HEK293T (cell line): ENCODE measurements at regions of chr11 and their contacts with region 1.

Region 1: DNA sequence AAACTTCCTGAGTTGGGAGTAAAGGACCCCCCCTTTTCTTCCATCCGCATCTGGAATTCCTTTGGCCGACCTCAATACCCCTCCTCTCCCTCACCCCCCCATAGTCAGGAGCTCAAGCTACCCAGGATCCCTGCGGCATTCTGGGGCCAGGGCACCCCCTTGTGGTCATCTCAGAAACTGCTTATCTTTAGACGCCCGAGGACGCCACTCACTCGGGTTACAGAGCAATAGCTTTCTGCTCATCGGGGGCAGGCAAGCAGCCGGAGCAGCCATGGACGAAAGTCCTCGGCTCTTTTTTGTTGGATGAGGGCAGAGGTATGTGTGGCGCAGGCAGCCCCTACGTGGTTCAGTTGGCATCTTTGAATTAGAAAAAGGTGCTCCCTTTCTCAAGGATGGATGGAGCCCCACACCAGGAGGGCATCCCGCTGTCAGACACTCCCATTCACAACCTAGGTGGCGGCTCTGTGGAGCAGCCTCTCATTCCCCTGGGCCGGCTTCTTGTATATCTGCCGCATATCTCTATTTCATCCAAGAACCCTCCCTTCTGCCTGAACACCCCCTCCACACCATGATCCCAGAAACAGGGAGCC is 2.3 kb downstream of the C1QTNF5 start:
- DNase-seq: peak; percentile 85

Region 2: GRCh38 chr11:118771547-118772288 is 566.7 kb before region 1 on chr11:
- CTCF ChIA-PET with region 1: no interaction called
- POLR2A ChIA-PET with region 1: no interaction called
- DNase-seq: no peak

Region 3: DNA sequence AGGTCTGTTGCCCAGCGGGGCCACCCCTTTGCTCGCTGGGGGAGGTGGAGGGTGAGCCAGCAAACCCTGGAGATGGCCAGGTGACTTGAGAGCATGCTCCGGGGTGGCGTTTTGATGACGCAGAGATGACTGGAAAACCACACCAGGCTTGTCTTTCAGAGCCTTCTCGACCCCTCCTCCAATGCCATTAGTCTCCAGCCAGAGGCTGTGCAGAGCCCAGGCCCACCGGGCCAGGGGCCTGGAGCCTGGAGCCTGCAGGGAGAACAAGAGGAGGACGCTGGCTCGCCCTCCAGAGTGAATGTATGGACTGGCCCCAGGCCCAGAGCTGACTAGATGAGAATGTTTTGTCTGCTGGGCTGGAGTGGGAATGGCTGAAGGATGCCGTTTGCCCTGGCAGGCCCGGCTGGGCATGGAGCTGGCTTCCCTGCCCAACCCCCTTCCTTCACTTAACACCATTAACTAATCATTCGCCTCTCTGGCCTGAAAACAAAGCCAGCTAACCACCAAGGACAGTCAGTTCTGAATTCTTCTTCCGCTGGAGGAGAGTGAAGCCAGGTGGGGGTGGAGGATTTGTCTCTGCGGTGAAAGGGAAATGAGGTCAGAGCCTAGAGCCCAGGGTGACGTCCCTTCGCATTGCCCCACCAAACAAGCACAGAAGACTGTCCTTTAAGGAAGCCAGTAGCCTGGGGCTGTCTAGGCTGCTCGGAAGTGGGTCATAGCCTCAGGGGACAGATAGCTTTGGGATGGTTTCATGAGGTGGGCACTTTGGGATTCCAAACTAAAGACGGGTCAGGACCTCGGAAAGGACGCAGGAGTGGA is 19.9 kb before region 1 on chr11:
- CTCF ChIA-PET with region 1: interaction called, 57 read pairs
- POLR2A ChIA-PET with region 1: interaction called, 17 read pairs
- DNase-seq: no peak

Region 4: GRCh38 chr11:119323538-119324033 is 14.8 kb before region 1 on chr11:
- CTCF ChIA-PET with region 1: interaction called, 57 read pairs
- POLR2A ChIA-PET with region 1: interaction called, 17 read pairs
- DNase-seq: peak; percentile 71

Region 5: DNA sequence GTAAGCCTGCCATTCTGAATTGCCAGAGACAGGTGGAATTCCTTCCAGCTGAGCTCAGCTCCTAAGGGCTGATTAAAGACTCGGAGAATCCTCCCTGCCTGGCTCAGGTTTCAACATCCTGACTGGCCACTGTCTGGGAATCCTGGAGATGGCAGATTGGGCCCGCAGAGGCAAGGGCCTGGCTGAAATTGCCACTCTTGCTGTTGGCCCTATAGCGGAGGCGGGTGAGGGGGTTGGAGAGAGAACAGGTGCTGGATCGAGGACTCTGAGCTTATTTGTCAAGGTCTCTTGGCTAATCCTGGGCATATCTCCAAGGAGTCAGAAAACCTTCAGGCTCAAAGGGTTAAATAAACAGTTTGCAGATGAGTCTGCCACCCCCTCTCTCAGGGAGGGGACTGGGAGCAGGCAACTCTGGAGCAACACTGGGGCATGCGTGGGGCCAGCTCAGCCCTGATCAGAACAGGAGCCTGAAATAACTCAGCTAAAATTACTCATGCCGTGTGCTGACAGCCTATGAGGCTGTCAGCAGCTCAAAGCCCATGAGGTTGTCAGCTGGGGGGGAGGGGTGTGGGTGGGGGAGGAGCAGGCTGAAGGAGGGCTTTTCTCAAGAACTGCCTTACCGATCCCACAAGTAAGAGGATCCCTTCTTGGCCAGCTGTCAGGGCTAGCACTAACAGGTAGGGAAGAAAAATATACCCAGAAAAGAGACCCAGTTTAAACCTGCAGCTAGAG is 22.8 kb after region 1 on chr11:
- CTCF ChIA-PET with region 1: interaction called, 11 read pairs
- POLR2A ChIA-PET with region 1: interaction called, 4 read pairs
- DNase-seq: peak; percentile 39

Region 6: DNA sequence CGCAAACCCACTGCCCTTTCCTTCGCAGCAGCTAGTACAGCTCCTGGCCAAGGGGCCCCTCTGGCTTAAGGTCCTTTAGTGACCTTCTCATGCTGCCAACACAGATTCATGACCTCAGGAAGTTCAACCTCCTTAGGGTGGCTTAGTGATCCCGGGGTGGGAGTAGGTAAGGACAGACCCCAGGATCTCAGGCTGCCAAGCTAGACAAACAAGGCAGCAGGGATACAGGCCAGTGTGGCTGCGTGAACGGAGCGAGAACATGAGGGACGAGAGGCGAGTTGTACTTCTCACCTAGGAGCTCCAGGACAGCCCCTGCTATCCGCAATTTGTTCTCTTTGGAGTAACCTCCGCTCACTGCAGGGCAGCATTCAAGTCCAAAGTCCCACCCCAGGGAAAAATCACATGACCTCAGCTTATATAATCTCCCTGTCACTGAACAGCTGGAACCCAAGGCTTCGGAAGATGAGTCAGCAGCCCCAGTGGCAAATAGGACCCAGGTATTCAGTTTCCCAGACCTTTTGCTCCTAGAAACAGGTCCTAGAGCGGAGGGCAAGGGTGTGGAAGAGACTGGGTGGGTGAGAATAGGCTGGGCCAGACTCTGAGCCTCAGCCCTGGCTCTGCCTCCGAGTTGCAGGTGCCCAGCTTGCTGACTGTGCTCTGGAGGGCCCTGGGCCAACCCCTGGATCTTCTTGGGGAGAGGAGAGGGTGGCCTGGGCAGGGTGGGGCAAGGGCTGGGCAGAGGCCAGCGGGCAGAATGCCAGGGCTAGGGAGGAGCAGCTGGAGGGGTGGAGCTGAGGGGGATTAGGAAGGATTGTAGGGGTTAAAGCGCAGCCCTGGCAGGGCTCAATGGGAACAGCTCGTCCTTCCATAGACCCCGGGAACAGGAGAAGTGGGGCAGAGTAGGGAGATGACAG is 30.0 kb after region 1 on chr11:
- CTCF ChIA-PET with region 1: interaction called, 21 read pairs
- POLR2A ChIA-PET with region 1: interaction called, 7 read pairs
- DNase-seq: no peak

Region 7: DNA sequence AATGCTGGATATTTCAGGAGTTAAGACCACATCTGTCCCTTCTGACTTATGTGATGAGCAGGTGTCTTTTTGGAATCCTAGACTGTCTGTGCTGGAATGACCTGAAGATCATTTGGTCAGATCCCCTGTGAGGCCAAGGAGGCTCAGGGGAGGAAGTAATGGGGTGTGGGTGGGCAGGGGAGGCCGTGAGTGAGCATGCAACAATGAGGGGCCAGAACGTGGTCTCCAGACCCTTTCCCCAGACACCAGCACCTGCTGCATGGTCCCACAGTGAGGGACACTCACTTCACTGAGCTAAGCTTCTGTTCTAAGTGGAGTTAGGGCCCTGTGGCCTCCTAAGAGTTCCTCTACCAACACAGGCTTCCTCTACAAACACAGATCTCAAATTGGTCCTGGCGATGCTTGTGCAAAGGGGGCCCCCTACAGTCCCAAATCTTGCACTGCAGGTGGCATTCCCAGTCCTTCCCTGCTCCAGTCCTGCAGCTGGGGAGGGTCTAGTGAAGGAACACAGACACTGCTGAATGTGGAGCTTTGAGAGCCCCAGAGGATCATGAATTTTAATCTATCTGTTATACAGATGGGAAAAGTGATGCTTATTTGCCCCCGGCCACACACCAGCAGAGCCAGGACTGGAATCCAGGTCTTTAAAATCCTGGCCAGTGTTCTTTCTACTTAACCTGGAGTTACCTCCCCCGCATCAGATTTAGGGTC is 35.7 kb after region 1 on chr11:
- CTCF ChIA-PET with region 1: interaction called, 21 read pairs
- POLR2A ChIA-PET with region 1: interaction called, 4 read pairs
- DNase-seq: peak; percentile 78

Region 8: DNA sequence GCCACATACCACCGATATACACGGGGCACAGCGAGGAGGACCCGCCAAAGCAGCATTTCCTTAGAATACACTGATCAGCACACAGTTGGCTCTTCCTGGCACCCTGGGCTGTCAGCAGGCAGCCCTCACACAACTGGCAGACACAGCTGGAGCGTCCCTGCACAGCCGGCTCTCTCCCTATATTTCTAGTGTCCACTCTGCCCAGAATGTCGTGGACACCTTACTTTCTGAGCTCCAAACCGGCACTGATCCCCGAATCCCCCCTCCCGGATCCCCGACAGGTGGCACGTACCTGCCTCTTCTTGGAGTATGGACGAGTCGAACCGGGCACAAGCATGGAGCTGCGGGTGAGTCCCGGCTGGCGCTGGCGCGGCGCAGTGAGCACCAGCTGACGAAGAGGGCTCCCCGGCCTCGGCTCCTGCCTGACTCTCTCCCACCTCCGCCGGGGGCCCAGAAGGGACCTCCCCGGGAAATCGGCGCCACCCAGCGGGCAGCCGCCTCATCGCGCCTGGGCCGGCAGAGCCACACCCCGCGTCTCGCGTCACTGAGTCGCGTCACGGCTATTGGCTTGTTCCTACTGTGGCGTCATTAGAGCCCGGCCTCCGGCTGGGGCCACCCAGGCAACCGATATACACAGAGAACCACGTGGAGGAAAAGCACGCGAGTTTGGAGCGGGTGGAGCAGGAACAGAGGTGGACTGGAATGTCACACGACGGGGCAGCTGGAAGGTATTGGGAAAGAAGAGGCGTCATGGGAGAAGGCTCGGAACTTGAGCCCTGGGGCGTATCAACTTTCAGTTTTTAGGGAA is 43.0 kb after region 1 on chr11 and contains the start of gene USP2:
- CTCF ChIA-PET with region 1: interaction called, 20 read pairs
- POLR2A ChIA-PET with region 1: interaction called, 4 read pairs
- DNase-seq: peak; percentile 96